Activated CD4-positive, alpha-beta T cell treated with anti-CD3 and anti-CD28 coated beads, Interleukin-2, amount 10 ng/mL, durations not matched to agents 24 days and 14 days (primary cell): ENCODE measurements at regions of chr19 and their contacts with region 1.

Region 1: GRCh38 chr19:37719111-37719926 is at the start of gene ZNF607:
- DNase-seq: peak; percentile 92
- H3K4me3 Mint-ChIP-seq: peak within 1 kb of the TSS; percentile 83
- H3K27ac Mint-ChIP-seq: peak within 1 kb of the TSS; percentile 84
- H3K4me1 Mint-ChIP-seq: peaks cover 7% of the 10 kb centered on the region
- H3K27me3 Mint-ChIP-seq: no peaks in the 10 kb centered on the region
- total RNA-seq, gene ZNF607: 2.8 and 3.4 TPM in 2 replicates

Region 2: DNA sequence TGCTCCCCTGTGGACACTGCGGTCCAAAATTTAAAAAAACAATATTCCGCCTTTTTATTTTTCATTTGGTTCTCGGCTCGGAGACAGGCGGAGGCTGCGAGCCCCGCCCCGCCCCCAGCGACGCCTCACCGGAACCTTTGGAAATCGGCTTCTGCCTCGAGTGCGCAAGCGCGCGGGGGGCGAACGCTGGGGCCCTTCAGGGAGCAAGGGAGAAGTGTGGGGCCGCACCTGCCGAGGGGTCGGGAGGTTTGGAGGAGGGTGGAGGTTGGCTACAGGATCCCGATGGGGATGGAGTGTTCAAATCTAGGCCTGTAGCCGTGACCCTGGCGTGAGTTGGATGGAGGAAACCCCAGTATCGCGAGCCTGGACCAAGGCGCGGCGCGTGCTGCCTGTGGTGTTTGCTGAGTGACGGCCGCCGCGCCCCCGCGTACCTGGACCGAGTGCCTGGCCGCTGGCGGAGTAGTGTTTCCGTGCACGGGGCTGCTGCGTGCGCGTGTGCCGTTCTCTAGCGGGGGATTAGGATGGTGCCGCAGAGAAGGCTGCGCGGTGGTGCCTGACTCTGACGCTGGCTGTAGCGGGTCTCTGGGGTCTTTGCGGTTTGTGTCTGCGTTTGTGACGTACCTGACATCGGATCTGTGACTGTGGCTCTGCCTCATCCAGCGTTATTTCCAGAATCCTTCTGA is 63.5 kb before region 1 on chr19:
- intact Hi-C with region 1: loop called (anchors 2 kb)
- DNase-seq: peak; percentile 96
- H3K4me3 Mint-ChIP-seq: peak overlapping the region; percentile 99
- H3K27ac Mint-ChIP-seq: peak overlapping the region; percentile 98
- H3K4me1 Mint-ChIP-seq: peaks cover 28% of the 10 kb centered on the region
- H3K27me3 Mint-ChIP-seq: no peaks in the 10 kb centered on the region

Region 3: GRCh38 chr19:37779127-37780005 is 60.0 kb after region 1 on chr19 and contains the start of gene ZNF573:
- intact Hi-C with region 1: loop called (anchors 1 kb)
- DNase-seq: peak; percentile 93
- H3K4me3 Mint-ChIP-seq: peak within 1 kb of the TSS; percentile 96
- H3K27ac Mint-ChIP-seq: peak within 1 kb of the TSS; percentile 92
- H3K4me1 Mint-ChIP-seq: peaks cover 11% of the 10 kb centered on the region
- H3K27me3 Mint-ChIP-seq: no peaks in the 10 kb centered on the region
- total RNA-seq, gene ZNF573: 6.5 and 6.8 TPM in 2 replicates